ENCODE measurements at regions of chr17 and their contacts with region 1.

Region 1: GRCh38 chr17:5419356-5419958 is at the start of gene NUP88:
- DNase-seq: peak; percentile 94 to 98 (median 98)
- H3K4me3 ChIP-seq: peak within 1 kb of the TSS; percentile 59 to 99 (median 91)
- H3K27ac ChIP-seq: peak within 1 kb of the TSS; percentile 44 to 94 (median 86)
- H3K27me3 ChIP-seq: no peaks in the 10 kb centered on the region
- CTCF ChIP-seq: peak in 16 of 56 donors; percentile 4 to 62 (median 23)
- total RNA-seq, gene NUP88: 34.5 to 69.6 (median 50.1) TPM

Region 2: DNA sequence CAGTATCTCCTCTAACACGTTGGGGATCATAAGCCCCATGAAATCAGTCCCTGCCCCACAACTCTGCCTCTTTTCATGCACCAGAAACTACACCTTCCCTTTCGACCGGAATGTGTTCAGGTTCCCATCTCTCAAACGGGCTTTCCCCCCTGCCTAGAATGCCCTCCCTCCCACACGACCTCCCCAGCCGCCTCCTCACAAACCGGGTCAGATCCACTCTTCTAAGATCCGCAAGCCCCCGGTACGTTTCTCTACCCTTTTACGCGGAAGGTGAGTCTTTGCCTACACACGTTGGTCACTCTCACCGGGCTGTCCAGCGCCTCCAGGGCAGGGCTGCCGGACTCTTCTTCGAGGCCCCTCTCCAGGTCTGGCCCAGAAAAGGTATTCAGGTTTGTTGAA is 48.6 kb after region 1 on chr17:
- intact Hi-C with region 1: loop called in 1 of 2 experiments (anchors 5 kb)
- DNase-seq: peak in 1 of 10 donors; percentile 11
- H3K4me3 ChIP-seq: peak overlapping the region; percentile 77 to 100 (median 97)
- H3K27ac ChIP-seq: peak overlapping the region in 30 of 59 donors; percentile 47 to 92 (median 77)
- H3K27me3 ChIP-seq: no peaks in the 10 kb centered on the region
- CTCF ChIP-seq: no peak

Measured in dorsolateral prefrontal cortex (tissue), 120 donors.